Heart right ventricle (tissue), 16 donors: ENCODE measurements at regions of chr2 and their contacts with region 1.

Region 1: DNA sequence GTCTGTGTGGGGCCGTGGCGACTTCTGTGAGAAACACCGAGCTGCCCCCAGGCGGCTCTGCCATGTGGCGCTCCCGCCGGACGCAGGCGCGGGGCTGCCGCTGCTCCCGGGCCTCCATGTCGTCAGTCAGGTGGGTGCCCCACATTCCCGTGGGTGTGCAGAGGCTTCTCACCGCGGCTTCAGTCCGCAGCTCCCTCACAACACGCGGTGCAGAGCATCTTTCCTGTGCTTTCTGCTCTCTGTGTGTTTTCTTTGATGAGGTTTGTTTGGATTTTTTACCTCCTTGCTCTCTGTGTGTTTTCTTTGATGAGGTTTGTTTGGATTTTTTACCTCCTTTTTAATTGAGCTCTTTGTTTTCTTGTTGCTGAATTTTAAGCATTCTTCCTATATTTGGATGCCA is 13.0 kb downstream of the AQP12A start:
- DNase-seq: peak in 1 of 2 donors; percentile 4
- ATAC-seq: no peak
- H3K4me3 ChIP-seq: no peak overlapping the region
- H3K27ac ChIP-seq: no peak overlapping the region
- H3K4me1 ChIP-seq: peaks cover 0 to 5% (median 0%) of the 10 kb centered on the region in 9 donors
- H3K27me3 ChIP-seq: peaks cover 0 to 78% (median 43%) of the 10 kb centered on the region in 7 donors
- CTCF ChIP-seq: no peak

Region 2: DNA sequence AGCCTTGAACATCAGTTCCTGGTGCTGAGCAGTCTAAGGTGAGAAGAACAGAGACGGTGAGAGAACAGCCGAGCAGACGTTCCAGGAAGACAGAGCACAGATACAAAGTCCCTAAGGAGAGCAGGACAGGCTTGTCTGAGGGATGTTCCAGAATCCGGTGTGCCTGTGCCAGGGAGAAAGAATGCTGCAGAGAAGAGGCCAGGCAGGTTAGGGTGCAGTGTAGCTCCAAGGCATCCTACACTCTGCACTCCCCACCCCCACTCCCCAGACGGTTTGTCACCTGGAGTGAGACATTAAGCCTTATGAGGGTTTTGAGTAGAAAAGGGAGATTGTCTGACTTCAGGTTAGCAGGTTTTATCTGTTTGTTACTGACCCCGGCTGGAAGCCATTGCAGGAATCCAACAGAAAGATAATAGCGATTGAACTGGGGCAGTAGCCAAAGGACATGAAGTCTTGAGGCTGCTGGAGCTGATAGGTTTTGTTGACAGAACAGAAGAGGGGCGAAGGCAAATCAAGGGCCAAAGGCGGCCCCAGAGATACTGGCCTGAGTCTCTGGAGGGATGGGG is 615.4 kb before region 1 on chr2:
- intact Hi-C with region 1: no loop called
- DNase-seq: no peak
- ATAC-seq: no peak
- H3K4me3 ChIP-seq: no peak overlapping the region
- H3K27ac ChIP-seq: no peak overlapping the region
- H3K4me1 ChIP-seq: no peaks in the 10 kb centered on the region
- H3K27me3 ChIP-seq: peaks cover 0 to 49% (median 35%) of the 10 kb centered on the region in 7 donors
- CTCF ChIP-seq: no peak

Region 3: DNA sequence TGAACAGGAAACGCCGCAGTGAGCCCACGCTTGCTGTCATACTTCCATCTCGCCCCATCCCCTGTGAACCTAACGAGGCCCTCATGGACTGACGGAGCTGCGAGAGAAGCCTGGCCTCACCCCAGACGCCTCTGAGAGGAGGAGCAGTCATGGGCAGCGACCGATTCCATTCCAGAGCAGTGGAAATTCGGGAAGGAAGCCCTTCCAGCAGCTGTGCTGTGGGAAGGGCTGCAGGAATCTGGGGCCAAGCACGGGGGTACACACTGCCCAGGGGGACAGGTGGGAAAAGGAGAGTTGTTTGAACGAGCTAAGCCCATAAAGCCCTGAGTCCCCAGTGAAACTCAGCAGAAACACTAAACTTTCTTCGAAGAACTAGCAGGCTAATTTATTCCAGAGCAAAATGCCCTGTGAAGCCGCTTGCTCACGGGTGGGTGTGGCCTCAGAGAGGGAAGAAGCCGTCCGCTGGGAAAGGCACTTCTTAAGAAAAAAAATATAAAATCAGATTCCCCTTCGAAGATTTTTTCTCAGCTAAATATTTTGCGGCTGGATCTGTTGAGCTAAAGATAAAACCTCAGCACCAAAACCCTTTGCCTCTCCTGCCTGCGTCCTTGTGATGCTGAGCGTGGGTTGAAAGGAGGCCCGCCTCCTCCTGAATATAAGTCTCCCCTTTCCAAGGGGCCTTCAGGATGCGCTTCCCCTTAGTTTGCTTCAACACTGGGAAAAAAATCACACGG is 185.1 kb before region 1 on chr2:
- intact Hi-C with region 1: loop called in 7 of 10 experiments (anchors 5 to 10 kb)
- DNase-seq: no peak
- ATAC-seq: peak in 2 of 8 donors; percentile 39 to 48
- H3K4me3 ChIP-seq: peak overlapping the region in 2 of 10 donors; percentile 4 to 18
- H3K27ac ChIP-seq: no peak overlapping the region
- H3K4me1 ChIP-seq: peaks cover 0 to 12% (median 6%) of the 10 kb centered on the region in 9 donors
- H3K27me3 ChIP-seq: peaks cover 0 to 23% (median 0%) of the 10 kb centered on the region in 7 donors
- CTCF ChIP-seq: no peak